Naive thymus-derived CD4-positive, alpha-beta T cell (primary cell): ENCODE measurements at regions of chr19 and their contacts with region 1.

Region 1: GRCh38 chr19:36054119-36054732 is at the start of gene THAP8:
- DNase-seq: peak; percentile 96 to 100 (median 100)
- ATAC-seq: peak; percentile 91
- H3K4me3 ChIP-seq: peak within 1 kb of the TSS; percentile 84
- H3K4me3 Mint-ChIP-seq: peak within 1 kb of the TSS; percentile 91 to 100 (median 99)
- H3K27ac ChIP-seq: peak within 1 kb of the TSS; percentile 83
- H3K27ac Mint-ChIP-seq: peak within 1 kb of the TSS; percentile 94 to 100 (median 98)
- H3K4me1 ChIP-seq: peaks cover 8 to 10% of the 10 kb centered on the region in 2 donors
- H3K4me1 Mint-ChIP-seq: peaks cover 6 to 43% (median 34%) of the 10 kb centered on the region in 7 donors
- H3K27me3 ChIP-seq: no peaks in the 10 kb centered on the region
- H3K27me3 Mint-ChIP-seq: no peaks in the 10 kb centered on the region
- total RNA-seq, gene THAP8: 2.2 to 6.6 (median 6.1) TPM

Region 2: DNA sequence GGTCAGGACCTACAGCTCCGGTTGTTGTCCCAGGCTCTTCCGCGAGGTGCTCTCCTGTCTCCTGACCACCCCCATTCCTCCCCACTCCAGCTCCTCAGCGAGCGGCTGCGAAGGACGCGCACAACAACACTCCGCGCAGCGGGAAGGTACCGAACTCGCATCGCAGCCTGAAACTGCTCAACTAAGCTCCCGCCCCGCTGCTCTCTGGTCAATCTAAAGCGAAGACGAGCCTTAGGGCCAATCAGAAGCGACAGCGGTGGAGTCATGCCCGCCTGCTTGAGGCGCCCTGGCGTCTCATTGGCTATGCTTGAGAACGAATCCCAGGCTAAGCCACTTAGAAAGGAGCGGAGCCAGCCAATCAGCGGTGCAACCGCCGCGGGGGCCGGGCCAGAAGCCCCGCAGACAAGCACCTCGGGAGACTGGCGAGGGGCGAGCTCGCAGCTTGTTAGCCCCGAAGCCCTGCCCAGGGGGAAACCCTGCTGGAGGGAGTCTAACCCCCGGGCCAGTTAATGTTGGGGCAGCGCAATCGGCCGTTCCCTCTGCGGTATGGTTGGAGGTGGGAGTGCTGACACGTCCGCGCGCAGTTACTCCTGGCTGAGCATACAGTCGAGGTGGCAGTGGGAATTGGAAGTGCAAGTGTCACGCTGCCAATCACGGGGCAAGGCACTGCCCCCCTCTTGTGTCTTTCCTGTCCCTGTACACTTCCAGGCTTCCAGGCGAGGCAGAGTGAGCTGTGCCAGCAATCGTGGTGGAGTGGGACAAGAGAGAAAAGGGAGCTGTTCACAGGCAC is 351.8 kb before region 1 on chr19:
- CTCF ChIA-PET with region 1: no interaction called
- POLR2A ChIA-PET with region 1: interaction called, 3 read pairs
- intact Hi-C with region 1: loop called (anchors 2 to 5 kb)
- DNase-seq: peak; percentile 66 to 96 (median 90)
- ATAC-seq: peak; percentile 100
- H3K4me3 ChIP-seq: peak overlapping the region; percentile 85
- H3K4me3 Mint-ChIP-seq: peak overlapping the region; percentile 88 to 100 (median 96)
- H3K27ac ChIP-seq: peak overlapping the region; percentile 66
- H3K27ac Mint-ChIP-seq: peak overlapping the region; percentile 79 to 98 (median 93)
- H3K4me1 ChIP-seq: no peaks in the 10 kb centered on the region
- H3K4me1 Mint-ChIP-seq: peaks cover 5 to 22% (median 6%) of the 10 kb centered on the region in 7 donors
- H3K27me3 ChIP-seq: no peaks in the 10 kb centered on the region
- H3K27me3 Mint-ChIP-seq: peaks cover 0 to 4% (median 0%) of the 10 kb centered on the region in 5 donors

Region 3: GRCh38 chr19:35775298-35776110 is 278.7 kb before region 1 on chr19 and contains the start of gene ARHGAP33:
- CTCF ChIA-PET with region 1: no interaction called
- POLR2A ChIA-PET with region 1: no interaction called
- intact Hi-C with region 1: loop called (anchors 2 to 10 kb)
- DNase-seq: peak; percentile 96 to 99 (median 98)
- ATAC-seq: peak; percentile 100
- H3K4me3 ChIP-seq: peak within 1 kb of the TSS; percentile 56
- H3K4me3 Mint-ChIP-seq: peak within 1 kb of the TSS; percentile 77 to 94 (median 86)
- H3K27ac ChIP-seq: peak within 1 kb of the TSS; percentile 61
- H3K27ac Mint-ChIP-seq: peak within 1 kb of the TSS in 7 of 9 donors; percentile 12 to 88 (median 84)
- H3K4me1 ChIP-seq: peaks cover 0 to 6% of the 10 kb centered on the region in 2 donors
- H3K4me1 Mint-ChIP-seq: peaks cover 11 to 28% (median 18%) of the 10 kb centered on the region in 7 donors
- H3K27me3 ChIP-seq: no peaks in the 10 kb centered on the region
- H3K27me3 Mint-ChIP-seq: no peaks in the 10 kb centered on the region
- total RNA-seq, gene ARHGAP33: 15.3 to 55.5 (median 23.4) TPM

Region 4: GRCh38 chr19:35931161-35931873 is 122.9 kb before region 1 on chr19:
- CTCF ChIA-PET with region 1: no interaction called
- POLR2A ChIA-PET with region 1: interaction called, 3 read pairs
- intact Hi-C with region 1: loop called (anchors 1 kb)
- DNase-seq: peak; percentile 96 to 100 (median 100)
- ATAC-seq: peak; percentile 98
- H3K4me3 ChIP-seq: peak overlapping the region; percentile 59
- H3K4me3 Mint-ChIP-seq: peak overlapping the region; percentile 61 to 94 (median 83)
- H3K27ac ChIP-seq: peak overlapping the region; percentile 73
- H3K27ac Mint-ChIP-seq: peak overlapping the region; percentile 51 to 98 (median 90)
- H3K4me1 ChIP-seq: peaks cover 32 to 44% of the 10 kb centered on the region in 2 donors
- H3K4me1 Mint-ChIP-seq: peaks cover 33 to 63% (median 49%) of the 10 kb centered on the region in 7 donors
- H3K27me3 ChIP-seq: no peaks in the 10 kb centered on the region
- H3K27me3 Mint-ChIP-seq: no peaks in the 10 kb centered on the region

Region 5: GRCh38 chr19:35995048-35995993 is 58.9 kb before region 1 on chr19 and contains the start of gene SDHAF1:
- CTCF ChIA-PET with region 1: interaction called, 3 read pairs
- POLR2A ChIA-PET with region 1: interaction called, 5 read pairs
- intact Hi-C with region 1: loop called (anchors 1 kb)
- DNase-seq: peak; percentile 77 to 94 (median 87)
- ATAC-seq: peak; percentile 96
- H3K4me3 ChIP-seq: peak within 1 kb of the TSS; percentile 84
- H3K4me3 Mint-ChIP-seq: peak within 1 kb of the TSS; percentile 89 to 99 (median 96)
- H3K27ac ChIP-seq: peak within 1 kb of the TSS; percentile 74
- H3K27ac Mint-ChIP-seq: peak within 1 kb of the TSS; percentile 90 to 97 (median 95)
- H3K4me1 ChIP-seq: peaks cover 11 to 16% of the 10 kb centered on the region in 2 donors
- H3K4me1 Mint-ChIP-seq: peaks cover 22 to 44% (median 33%) of the 10 kb centered on the region in 7 donors
- H3K27me3 ChIP-seq: no peaks in the 10 kb centered on the region
- H3K27me3 Mint-ChIP-seq: no peaks in the 10 kb centered on the region
- total RNA-seq, gene SDHAF1: 7.8 to 26.1 (median 17.8) TPM

Region 6: GRCh38 chr19:36073121-36073872 is 19.1 kb after region 1 on chr19:
- CTCF ChIA-PET with region 1: no interaction called
- POLR2A ChIA-PET with region 1: no interaction called
- intact Hi-C with region 1: no loop called
- DNase-seq: no peak
- ATAC-seq: no peak
- H3K4me3 ChIP-seq: no peak overlapping the region
- H3K4me3 Mint-ChIP-seq: no peak overlapping the region
- H3K27ac ChIP-seq: no peak overlapping the region
- H3K27ac Mint-ChIP-seq: no peak overlapping the region
- H3K4me1 ChIP-seq: no peaks in the 10 kb centered on the region
- H3K4me1 Mint-ChIP-seq: peaks cover 0 to 2% (median 0%) of the 10 kb centered on the region in 7 donors
- H3K27me3 ChIP-seq: no peaks in the 10 kb centered on the region
- H3K27me3 Mint-ChIP-seq: no peaks in the 10 kb centered on the region

Region 7: DNA sequence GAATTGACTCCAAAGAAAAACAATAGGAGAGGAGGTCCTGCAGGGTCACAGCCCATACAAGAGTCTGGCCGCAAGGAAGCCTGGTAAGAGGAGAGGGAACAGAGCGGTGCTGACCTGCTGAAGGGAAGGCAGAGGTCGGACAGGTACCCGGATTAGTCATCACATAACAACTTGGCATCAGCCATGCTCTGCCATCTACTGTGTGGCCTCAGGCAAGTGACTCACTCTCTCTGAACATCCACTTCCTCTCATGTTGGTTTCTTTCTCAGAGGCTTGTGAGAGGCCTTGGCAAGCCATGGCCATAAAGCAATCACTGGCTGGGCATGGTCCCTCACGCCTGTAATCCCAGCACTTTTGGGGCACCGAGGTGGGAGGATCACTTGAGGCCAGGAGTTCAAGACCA is 78.3 kb after region 1 on chr19:
- CTCF ChIA-PET with region 1: interaction called, 4 read pairs
- POLR2A ChIA-PET with region 1: interaction called, 3 read pairs
- intact Hi-C with region 1: loop called in 1 of 2 experiments (anchors 1 kb)
- DNase-seq: no peak
- ATAC-seq: peak; percentile 50
- H3K4me3 ChIP-seq: no peak overlapping the region
- H3K4me3 Mint-ChIP-seq: peak overlapping the region in 2 of 10 donors; percentile 12 to 29
- H3K27ac ChIP-seq: no peak overlapping the region
- H3K27ac Mint-ChIP-seq: peak overlapping the region in 1 of 9 donors; percentile 80
- H3K4me1 ChIP-seq: no peaks in the 10 kb centered on the region
- H3K4me1 Mint-ChIP-seq: peaks cover 0 to 34% (median 5%) of the 10 kb centered on the region in 7 donors
- H3K27me3 ChIP-seq: no peaks in the 10 kb centered on the region
- H3K27me3 Mint-ChIP-seq: no peaks in the 10 kb centered on the region

Region 8: DNA sequence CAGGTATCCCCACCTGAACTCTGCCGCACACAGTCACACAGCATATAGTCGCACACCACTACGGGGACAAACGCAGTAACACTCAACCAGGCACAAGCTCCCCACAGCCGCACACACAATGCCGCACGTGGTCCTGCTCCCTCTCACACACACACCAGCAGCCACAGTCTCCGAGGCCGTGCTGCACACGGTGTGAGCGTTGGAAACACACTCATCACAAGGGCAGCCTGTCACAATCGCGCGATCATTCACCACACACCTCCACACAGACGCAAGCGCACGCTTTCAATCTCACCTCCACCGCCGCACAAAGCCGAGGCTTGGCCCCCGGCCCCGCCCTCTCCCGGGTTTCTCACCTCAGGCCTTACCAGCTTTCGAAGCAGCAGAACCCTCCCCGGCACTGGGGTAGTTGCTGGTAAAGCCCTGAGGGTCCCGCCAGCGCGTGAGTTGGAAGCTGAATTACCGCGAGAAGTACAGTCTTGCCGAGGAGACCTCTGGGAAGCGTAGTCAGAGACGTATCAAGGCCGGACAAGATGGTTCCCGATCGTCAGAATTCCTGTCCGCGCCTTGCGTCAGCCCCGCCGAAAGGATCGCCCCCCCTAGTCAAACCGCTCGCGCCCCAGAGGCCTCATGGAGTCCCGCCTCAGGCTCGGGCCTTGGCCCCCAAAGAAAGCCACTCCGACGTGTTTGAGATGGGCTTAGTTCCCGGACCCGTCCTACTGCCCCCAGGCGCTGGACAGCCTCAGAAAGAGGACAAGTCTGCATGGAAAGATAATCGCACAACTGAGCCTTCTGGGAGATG is 435.1 kb after region 1 on chr19 and contains the start of gene ZNF566:
- CTCF ChIA-PET with region 1: no interaction called
- POLR2A ChIA-PET with region 1: no interaction called
- intact Hi-C with region 1: loop called in 1 of 2 experiments (anchors 1 kb)
- DNase-seq: peak; percentile 74 to 98 (median 94)
- ATAC-seq: peak; percentile 95
- H3K4me3 ChIP-seq: peak within 1 kb of the TSS; percentile 97
- H3K4me3 Mint-ChIP-seq: peak within 1 kb of the TSS; percentile 93 to 99 (median 98)
- H3K27ac ChIP-seq: peak within 1 kb of the TSS; percentile 90
- H3K27ac Mint-ChIP-seq: peak within 1 kb of the TSS; percentile 93 to 99 (median 98)
- H3K4me1 ChIP-seq: peaks cover 9 to 10% of the 10 kb centered on the region in 2 donors
- H3K4me1 Mint-ChIP-seq: peaks cover 22 to 43% (median 30%) of the 10 kb centered on the region in 7 donors
- H3K27me3 ChIP-seq: no peaks in the 10 kb centered on the region
- H3K27me3 Mint-ChIP-seq: no peaks in the 10 kb centered on the region
- total RNA-seq, gene ZNF566: 9.2 to 29.8 (median 9.3) TPM